ENCODE measurements at regions of chr20 and their contacts with region 1.

Region 1: DNA sequence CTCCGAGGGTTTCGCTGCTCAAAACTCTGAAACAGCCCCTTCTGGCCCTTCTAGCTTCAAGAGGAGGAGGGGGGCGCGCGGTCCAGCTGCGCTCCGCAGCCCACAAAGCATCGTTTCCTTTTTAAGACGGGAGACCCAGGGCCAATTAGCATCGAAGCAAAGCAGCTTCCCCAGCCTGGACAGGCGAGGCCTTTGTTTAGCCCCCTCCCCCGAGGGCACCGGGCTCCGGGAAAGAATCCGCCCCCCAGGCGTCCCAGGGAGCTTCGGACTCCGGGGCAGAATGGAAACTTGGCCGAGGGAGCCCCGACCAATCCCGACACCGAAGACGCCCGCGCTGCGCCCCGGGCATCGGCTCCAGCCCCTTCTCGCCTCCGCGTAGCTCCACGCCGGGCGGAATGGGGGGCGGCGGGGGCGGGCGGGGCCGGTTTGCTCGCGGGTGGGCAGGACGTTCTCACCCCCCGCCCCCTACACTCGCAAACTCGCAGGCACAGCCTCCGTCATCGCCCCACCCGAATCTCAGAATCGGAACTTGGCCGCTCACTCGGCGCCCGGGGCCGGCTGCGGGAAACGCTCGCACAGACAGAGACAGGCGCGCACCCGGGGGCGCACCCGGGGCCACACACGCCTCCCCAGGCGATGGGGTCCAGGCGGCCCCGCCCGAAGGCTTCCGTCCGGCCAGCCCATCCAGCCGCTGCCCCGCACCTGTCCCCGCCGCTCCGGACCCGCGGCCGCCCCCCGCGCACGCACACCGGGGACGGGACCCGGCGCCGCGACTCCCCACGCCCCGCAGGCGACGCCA is 626 bp downstream of the NKAIN4 start:
- DNase-seq: peak; percentile 38
- H3K27ac ChIP-seq: no peak overlapping the region
- CTCF ChIP-seq: no peak

Region 2: GRCh38 chr20:63230800-63231268 is 22.8 kb before region 1 on chr20:
- CTCF ChIA-PET with region 1: interaction called, 11 read pairs
- POLR2A ChIA-PET with region 1: interaction called, 3 read pairs
- DNase-seq: no peak
- H3K27ac ChIP-seq: no peak overlapping the region
- CTCF ChIP-seq: peak; percentile 71

Measured in RWPE1 (cell line).